ENCODE measurements at regions of chr20 and their contacts with region 1.

Region 1: GRCh38 chr20:40990542-40991120 is 38.0 kb upstream of the TOP1 start:
- DNase-seq: no peak
- H3K4me3 ChIP-seq: no peak overlapping the region
- CTCF ChIP-seq: peak; percentile 90

Region 2: DNA sequence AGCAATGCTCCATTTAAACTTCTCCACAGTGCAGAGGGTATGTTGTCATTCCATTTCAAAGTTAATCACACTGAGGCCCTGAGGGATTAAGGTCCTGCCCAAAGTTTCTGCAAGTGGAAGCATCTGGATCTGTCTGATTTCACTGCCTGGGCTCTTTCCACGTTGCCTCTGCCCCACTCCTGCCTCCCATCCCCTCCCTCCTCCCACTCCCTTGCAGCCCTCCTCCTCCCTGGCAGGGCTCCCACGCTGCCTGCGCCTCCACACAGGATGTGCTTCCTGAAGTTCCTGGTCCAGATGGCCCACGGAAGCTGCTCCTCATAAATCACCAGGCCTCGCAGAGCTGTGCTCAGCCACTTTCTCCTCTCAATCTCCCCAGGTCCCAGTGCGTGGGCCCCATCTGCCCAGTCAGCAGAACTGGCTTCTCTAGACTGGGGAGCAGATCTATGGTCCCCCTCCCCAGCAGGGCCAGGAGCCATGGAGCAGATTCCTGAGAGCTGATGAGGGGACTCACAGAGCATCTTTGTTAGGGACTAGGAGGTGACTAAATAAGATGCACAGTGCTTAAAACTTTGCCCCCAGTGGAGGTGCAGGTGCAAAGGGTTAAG is 236.2 kb before region 1 on chr20:
- CTCF ChIA-PET with region 1: no interaction called
- POLR2A ChIA-PET with region 1: no interaction called
- DNase-seq: no peak
- H3K4me3 ChIP-seq: no peak overlapping the region
- CTCF ChIP-seq: no peak

Region 3: DNA sequence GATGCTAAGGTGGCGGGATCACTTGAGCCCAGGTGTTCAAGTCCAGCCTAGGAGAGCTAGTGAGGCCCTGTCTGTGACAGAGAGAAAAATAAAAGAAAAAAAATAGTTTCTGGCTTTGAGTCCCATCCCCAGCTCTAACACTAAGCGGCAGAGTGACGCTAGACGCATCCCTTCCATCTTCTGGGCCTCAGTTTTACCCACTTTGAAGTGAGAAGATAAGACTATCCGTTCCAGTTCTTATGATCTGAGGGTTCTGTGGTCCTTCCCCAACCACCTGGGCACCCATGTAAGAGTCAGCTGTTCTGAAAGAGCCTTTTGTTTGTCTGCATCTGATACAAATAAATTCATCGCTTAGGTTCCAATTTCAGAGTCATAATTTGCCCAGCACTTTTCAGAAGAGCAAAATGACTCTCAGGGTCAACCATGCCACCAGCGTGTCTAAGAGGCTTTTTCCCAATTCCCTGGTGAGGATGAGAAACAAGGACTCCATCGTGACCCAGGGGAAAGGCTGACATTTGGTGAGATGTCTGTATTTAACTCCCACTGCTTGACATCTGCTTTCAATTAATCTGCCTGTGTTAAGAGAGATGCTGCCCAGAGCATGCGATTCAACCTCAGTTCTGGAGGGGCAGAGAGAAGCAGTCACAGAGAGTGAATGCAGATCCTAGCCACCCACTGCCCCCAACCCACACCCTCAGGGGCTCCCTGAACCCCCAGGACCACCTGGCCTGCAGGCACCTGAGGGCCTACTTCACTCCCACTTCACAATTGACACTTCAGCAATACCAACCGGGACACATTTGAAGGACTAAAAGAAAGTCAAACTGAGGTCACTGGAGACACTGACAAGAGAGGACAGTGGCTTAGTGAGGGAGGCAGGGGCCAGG is 93.6 kb before region 1 on chr20:
- CTCF ChIA-PET with region 1: no interaction called
- POLR2A ChIA-PET with region 1: no interaction called
- DNase-seq: peak; percentile 1
- H3K4me3 ChIP-seq: no peak overlapping the region
- CTCF ChIP-seq: no peak

Region 4: DNA sequence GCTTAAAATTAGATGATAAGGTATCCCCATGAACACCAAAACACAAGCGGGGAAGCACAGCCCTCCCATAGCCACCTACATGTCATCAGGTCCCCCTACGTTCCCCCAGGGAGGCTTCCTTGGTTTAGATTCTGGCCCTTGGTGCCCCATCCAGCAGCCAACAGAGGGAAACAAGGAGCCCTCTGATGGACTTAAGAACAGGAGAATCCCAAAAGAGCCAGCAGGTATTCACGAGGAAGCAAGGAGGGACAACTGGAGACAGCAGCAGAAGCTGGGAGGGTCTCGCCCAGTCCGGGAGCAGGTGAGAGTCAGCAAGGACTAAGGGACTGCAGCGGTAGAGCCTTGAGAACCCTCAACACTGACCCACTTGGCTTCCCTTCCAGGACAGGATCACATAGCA is 20.4 kb before region 1 on chr20:
- CTCF ChIA-PET with region 1: interaction called, 33 read pairs
- POLR2A ChIA-PET with region 1: no interaction called
- DNase-seq: no peak
- H3K4me3 ChIP-seq: no peak overlapping the region
- CTCF ChIP-seq: no peak

Region 5: GRCh38 chr20:41003143-41003883 is 12.7 kb after region 1 on chr20:
- CTCF ChIA-PET with region 1: interaction called, 32 read pairs
- POLR2A ChIA-PET with region 1: no interaction called
- DNase-seq: peak; percentile 76
- H3K4me3 ChIP-seq: no peak overlapping the region
- CTCF ChIP-seq: no peak

Region 6: GRCh38 chr20:41057999-41058896 is 67.6 kb after region 1 on chr20:
- CTCF ChIA-PET with region 1: interaction called, 307 read pairs
- POLR2A ChIA-PET with region 1: no interaction called
- DNase-seq: peak; percentile 65
- H3K4me3 ChIP-seq: no peak overlapping the region
- CTCF ChIP-seq: no peak

Region 7: DNA sequence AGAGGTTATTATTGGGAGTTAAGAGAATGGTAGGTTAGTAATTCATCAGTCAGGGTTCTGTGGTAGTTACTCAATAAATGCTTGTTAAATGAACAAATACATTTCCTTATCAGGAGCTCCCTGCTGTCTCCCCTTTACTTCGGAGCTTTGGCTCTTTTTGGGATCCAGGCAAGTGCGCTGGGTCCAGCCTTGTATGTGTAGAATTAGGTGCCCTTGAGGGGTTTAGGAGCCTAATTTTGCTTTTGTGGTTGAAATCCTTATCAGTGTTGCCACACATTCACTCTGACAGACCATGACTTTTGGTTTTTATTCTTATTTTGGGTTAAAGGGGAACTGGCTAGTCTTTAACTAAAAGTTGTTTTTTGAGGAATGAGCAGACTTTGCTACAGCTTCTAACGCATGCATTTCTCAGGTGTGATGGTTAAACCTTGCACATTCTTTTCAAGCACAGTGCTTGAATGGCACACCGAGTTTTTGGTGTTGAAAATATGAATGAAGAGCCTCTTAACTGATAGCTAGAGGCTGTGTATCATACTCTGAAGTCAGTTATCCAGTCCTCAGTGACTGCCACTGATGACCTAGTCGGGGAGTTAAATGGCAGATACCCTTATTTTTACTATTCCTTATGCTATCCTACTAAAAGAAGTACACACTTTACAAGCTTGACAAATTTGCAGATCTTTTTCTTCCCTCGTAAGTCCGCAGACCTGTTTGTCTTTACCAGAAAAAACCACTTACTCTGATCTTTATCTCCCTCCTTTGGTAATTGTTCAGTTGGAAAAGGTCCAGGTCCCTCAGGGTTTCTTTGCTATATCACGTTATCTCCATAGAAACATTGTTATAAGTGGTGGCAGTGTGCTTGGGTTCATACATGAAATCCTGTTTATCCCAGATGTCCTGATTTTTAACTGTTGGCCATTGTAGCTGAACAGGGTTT is 96.0 kb after region 1 on chr20:
- CTCF ChIA-PET with region 1: interaction called, 439 read pairs
- POLR2A ChIA-PET with region 1: interaction called, 3 read pairs
- DNase-seq: no peak
- H3K4me3 ChIP-seq: no peak overlapping the region
- CTCF ChIP-seq: no peak

Region 8: GRCh38 chr20:41110930-41111577 is 120.4 kb after region 1 on chr20:
- CTCF ChIA-PET with region 1: interaction called, 439 read pairs
- POLR2A ChIA-PET with region 1: no interaction called
- DNase-seq: no peak
- H3K4me3 ChIP-seq: no peak overlapping the region
- CTCF ChIP-seq: no peak